ENCODE measurements at regions of chr16 and their contacts with region 1.

Region 1: GRCh38 chr16:68512183-68512582 is 26.9 kb upstream of the ZFP90 start:
- DNase-seq: no peak
- H3K4me3 ChIP-seq: no peak overlapping the region
- H3K4me3 Mint-ChIP-seq: no peak overlapping the region
- H3K27ac ChIP-seq: no peak overlapping the region
- H3K27ac Mint-ChIP-seq: no peak overlapping the region
- H3K4me1 ChIP-seq: peaks cover 4% of the 10 kb centered on the region
- H3K4me1 Mint-ChIP-seq: no peaks in the 10 kb centered on the region
- H3K27me3 ChIP-seq: no peaks in the 10 kb centered on the region
- H3K27me3 Mint-ChIP-seq: peaks cover 0 to 9% of the 10 kb centered on the region in 2 donors

Region 2: GRCh38 chr16:68406451-68407152 is 105.6 kb before region 1 on chr16:
- CTCF ChIA-PET with region 1: interaction called, 12 read pairs
- POLR2A ChIA-PET with region 1: no interaction called
- DNase-seq: no peak
- H3K4me3 ChIP-seq: no peak overlapping the region
- H3K4me3 Mint-ChIP-seq: no peak overlapping the region
- H3K27ac ChIP-seq: no peak overlapping the region
- H3K27ac Mint-ChIP-seq: no peak overlapping the region
- H3K4me1 ChIP-seq: peaks cover under 1% of the 10 kb centered on the region
- H3K4me1 Mint-ChIP-seq: peaks cover 6 to 13% (median 10%) of the 10 kb centered on the region in 3 donors
- H3K27me3 ChIP-seq: peaks cover 3% of the 10 kb centered on the region
- H3K27me3 Mint-ChIP-seq: peaks cover 4 to 7% of the 10 kb centered on the region in 2 donors